ENCODE measurements at regions of chr9 and their contacts with region 1.

Region 1: GRCh38 chr9:123349691-123350480 is 6.1 kb upstream of the CRB2 start:
- DNase-seq: peak in 34 of 42 donors; percentile 46 to 88 (median 68)

Region 2: DNA sequence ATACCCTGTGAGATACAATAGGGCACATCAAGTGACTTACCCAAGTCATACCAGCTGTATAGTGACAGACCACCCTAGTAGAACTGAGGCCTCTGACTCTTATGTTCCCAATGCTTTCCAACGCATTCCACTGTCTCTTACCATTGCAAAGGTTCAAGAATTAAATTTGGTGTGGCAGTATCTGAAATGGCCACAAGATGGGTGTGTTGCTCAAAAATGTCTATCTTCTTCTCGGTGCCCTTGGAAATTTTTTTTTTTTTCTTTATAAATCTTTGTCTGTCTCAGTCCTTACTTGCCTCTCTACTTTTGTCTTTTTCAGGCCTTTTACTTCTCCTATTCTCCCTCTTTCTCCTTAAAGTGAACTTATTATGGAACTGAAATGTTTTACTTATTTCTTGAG is 268.1 kb before region 1 on chr9:
- intact Hi-C with region 1: loop called (anchors 5 kb)
- DNase-seq: peak in 2 of 42 donors; percentile 27 to 42

Region 3: GRCh38 chr9:123389070-123389469 is 39.2 kb after region 1 on chr9:
- intact Hi-C with region 1: loop called (anchors 5 kb)
- DNase-seq: no peak

Region 4: DNA sequence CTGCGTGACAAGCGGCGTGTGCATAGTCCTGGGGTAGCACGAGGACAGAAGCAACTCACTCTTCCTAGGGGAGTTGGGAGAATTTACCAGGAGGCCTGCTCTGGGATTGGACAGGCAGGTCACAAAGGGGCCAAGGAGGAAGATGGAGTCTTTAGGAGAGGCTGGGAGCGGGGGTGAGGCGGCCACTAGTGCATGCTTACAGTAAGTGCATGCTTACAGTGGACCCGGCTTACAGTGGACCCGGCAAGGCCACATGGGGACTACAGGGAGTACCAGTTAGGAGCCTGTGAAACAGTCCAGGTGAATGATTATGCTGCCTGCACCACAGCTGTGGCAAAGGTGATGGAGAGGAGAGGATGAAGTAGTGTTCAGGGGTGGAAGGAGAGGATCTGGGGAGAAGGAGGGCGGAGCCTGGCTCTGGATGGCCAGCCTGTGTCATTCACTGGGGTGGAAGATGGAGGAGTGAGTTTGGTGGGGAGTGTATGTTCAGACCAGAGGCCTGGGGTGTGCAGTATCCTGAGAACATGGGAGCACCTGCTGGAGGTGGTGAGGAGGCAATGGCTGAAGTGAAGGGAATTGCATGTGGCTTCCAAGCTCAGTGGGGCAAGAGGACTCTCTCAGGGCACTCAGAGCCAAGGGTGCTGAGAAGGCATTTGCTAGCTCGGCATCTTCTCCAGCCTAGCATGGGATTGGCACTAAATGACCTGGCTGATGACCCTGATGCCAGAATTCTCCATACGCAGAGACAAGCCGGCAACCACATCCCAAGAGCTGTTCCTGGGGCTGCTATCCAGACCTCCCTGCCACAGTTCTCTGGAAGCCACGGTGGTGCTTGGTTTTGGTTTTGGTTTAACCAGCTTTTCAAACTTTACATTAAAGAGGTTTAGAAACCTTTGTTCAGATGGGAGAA is 85.0 kb after region 1 on chr9:
- intact Hi-C with region 1: no loop called
- DNase-seq: peak in 6 of 42 donors; percentile 6 to 28 (median 15)

Region 5: DNA sequence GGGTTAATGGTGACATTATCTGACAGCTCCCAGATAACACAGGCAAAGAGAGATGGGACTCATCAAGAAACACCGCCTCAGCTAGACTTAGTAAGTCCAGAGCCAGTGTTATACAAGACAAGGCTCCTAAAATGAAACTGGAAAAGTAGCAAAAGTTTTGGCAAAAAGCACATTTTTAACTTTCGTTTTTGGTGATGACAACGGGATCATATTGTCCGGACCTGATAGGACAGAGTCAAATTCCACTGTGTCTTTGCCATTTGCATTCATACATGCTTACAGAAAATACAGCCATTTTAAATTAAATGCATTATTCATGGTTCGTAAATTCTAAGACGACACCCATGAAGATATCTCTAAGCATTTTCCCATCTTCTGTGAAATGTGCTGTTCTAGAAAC is 158.2 kb after region 1 on chr9:
- intact Hi-C with region 1: no loop called
- DNase-seq: no peak

Measured in head of caudate nucleus (tissue), 42 donors.